ENCODE measurements at regions of chr6 and their contacts with region 1.

Region 1: DNA sequence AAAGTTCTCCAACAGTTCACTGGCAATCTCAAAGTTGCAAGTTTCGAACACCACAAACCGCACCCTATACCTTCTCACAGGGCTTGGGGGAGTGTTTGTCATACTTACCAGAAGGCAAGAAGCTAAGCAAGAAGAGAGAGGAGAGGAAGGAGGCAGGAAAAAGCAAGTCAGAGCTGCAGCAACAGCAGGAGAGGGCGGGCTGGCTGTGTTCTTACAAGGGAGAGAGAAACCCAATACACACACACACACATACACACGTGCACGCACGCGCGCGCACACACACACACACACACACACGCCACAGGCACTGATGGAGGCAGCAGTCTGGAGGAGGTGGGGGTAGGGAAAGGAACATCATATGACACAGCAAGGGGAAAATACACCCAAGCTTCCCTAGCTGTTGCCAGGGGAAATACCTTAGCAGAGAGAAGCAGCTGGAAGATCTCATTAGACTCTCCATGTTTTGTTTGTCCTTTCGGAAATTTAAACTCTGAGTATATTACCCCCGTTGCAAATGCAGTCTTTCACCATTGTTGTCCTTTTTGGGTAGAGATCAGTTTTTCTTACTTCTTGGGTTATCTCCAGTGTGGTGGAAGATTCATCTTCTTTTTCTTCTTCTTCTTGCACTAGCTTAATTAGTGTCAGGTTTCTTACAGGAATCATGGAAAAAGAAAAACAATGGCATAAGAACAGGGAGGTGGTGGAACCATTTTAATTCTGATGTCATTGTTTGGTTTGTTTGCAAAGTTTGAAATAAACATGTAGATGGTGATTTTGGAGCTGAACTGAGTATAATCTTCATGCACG is at the start of gene TXLNB:
- DNase-seq: peak; percentile 95
- H3K4me3 Mint-ChIP-seq: peak within 1 kb of the TSS; percentile 84
- H3K27ac Mint-ChIP-seq: peak within 1 kb of the TSS; percentile 99
- H3K4me1 Mint-ChIP-seq: peaks cover 47% of the 10 kb centered on the region
- H3K27me3 Mint-ChIP-seq: no peaks in the 10 kb centered on the region
- total RNA-seq, gene TXLNB: 0.09 TPM in 1 of 2 replicates, not detected in the other

Region 2: GRCh38 chr6:138692058-138692977 is 599.7 kb before region 1 on chr6:
- intact Hi-C with region 1: no loop called
- DNase-seq: peak; percentile 88
- H3K4me3 Mint-ChIP-seq: peak overlapping the region; percentile 64
- H3K27ac Mint-ChIP-seq: no peak overlapping the region
- H3K4me1 Mint-ChIP-seq: peaks cover 3% of the 10 kb centered on the region
- H3K27me3 Mint-ChIP-seq: peaks cover 56% of the 10 kb centered on the region

Region 3: GRCh38 chr6:139124887-139125672 is 166.9 kb before region 1 on chr6:
- intact Hi-C with region 1: loop called (anchors 1 kb)
- DNase-seq: peak; percentile 94
- H3K4me3 Mint-ChIP-seq: peak overlapping the region; percentile 73
- H3K27ac Mint-ChIP-seq: peak overlapping the region; percentile 98
- H3K4me1 Mint-ChIP-seq: peaks cover 41% of the 10 kb centered on the region
- H3K27me3 Mint-ChIP-seq: no peaks in the 10 kb centered on the region

Region 4: GRCh38 chr6:139219271-139219729 is 72.7 kb before region 1 on chr6:
- intact Hi-C with region 1: loop called (anchors 2 kb)
- DNase-seq: peak; percentile 90
- H3K4me3 Mint-ChIP-seq: peak overlapping the region; percentile 52
- H3K27ac Mint-ChIP-seq: peak overlapping the region; percentile 82
- H3K4me1 Mint-ChIP-seq: peaks cover 10% of the 10 kb centered on the region
- H3K27me3 Mint-ChIP-seq: no peaks in the 10 kb centered on the region

Region 5: DNA sequence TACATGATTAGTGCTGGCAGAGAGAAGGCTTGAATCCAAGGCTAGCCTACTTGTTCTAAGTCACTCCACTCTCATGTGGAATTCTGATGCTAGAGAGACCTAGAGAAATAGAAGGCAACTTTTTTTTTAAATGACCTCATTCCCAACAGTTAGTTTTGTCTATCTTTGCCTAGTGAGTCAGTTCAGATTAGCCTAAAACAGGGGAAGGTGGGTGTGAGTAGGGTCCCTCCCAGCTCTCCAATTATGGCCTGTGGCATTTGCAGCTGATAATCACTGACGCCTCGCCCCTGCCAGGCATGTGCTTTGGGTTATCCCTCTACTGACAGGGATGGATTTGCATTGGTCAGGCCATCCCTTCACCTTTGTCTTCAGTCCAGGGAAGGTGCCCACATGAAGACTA is 13.8 kb before region 1 on chr6:
- intact Hi-C with region 1: loop called (anchors 1 kb)
- DNase-seq: peak; percentile 45
- H3K4me3 Mint-ChIP-seq: no peak overlapping the region
- H3K27ac Mint-ChIP-seq: no peak overlapping the region
- H3K4me1 Mint-ChIP-seq: peaks cover 25% of the 10 kb centered on the region
- H3K27me3 Mint-ChIP-seq: no peaks in the 10 kb centered on the region

Region 6: DNA sequence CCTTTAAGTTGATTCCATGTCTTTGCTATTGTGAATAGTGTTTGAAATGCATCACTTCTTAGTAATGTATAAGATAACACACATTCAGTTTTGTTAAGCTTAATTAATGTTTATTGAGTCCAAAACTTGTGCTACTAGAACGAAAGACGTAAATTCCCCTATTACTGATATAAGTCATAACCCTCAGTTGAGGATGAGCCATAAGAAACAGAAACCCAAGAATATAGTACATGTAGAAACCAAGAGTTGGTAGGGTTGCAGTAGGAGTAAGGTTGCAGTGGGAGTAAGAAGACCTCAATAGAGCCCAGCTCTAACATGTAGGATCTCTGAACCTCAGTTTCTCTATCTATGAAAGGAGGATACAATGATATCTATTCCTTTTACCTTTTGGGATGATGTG is 63.2 kb after region 1 on chr6:
- intact Hi-C with region 1: loop called (anchors 2 kb)
- DNase-seq: no peak
- H3K4me3 Mint-ChIP-seq: no peak overlapping the region
- H3K27ac Mint-ChIP-seq: no peak overlapping the region
- H3K4me1 Mint-ChIP-seq: peaks cover 8% of the 10 kb centered on the region
- H3K27me3 Mint-ChIP-seq: no peaks in the 10 kb centered on the region

Measured in activated CD4-positive, alpha-beta T cell treated with anti-CD3 and anti-CD28 coated beads, Interleukin-2, amount 10 ng/mL, durations not matched to agents 24 days and 14 days (primary cell).